Activated naive CD4-positive, alpha-beta T cell treated with anti-CD3 and anti-CD28 coated beads for 36 hours (primary cell): ENCODE measurements at regions of chr17 and their contacts with region 1.

Region 1: DNA sequence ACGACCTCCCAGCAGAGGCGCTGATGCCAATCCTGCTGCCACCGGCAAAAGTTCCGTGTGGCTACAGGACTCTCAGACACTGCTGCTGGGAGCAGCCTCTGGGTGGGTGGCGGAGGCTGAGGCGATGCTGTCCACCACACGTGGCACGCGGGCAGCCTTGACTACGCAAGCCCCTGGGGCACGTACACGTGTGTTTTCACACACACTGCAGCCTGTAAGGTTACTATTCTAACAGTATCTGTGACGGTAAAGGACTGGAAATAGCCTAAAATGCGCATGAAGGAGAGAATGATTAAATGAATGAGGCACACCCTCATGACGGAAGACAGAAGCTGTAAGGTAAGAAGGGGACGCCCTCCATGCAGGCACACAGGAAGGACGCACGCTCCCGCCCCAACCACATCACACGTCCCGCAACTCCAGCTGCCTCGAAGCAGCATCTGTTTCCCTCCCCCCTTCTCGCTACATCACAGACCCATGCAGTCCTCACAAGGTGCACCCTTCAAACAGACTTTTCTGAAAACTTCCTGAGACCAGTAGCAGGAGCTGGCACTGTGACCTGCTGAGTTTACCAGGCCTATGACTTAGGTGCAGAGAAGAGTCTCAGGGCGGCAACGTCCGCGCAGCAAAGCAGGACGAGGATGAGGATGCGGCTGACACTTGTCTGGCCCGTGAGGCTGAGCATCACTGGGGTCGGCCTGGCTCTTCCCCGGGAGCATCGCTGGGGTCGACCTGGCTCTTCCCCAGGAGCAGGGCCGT is 28.7 kb upstream of the FASN start:
- DNase-seq: peak; percentile 95
- H3K4me3 Mint-ChIP-seq: peak overlapping the region; percentile 71
- H3K27ac Mint-ChIP-seq: peak overlapping the region; percentile 95
- H3K4me1 Mint-ChIP-seq: peaks cover 65% of the 10 kb centered on the region
- H3K27me3 Mint-ChIP-seq: no peaks in the 10 kb centered on the region

Region 2: DNA sequence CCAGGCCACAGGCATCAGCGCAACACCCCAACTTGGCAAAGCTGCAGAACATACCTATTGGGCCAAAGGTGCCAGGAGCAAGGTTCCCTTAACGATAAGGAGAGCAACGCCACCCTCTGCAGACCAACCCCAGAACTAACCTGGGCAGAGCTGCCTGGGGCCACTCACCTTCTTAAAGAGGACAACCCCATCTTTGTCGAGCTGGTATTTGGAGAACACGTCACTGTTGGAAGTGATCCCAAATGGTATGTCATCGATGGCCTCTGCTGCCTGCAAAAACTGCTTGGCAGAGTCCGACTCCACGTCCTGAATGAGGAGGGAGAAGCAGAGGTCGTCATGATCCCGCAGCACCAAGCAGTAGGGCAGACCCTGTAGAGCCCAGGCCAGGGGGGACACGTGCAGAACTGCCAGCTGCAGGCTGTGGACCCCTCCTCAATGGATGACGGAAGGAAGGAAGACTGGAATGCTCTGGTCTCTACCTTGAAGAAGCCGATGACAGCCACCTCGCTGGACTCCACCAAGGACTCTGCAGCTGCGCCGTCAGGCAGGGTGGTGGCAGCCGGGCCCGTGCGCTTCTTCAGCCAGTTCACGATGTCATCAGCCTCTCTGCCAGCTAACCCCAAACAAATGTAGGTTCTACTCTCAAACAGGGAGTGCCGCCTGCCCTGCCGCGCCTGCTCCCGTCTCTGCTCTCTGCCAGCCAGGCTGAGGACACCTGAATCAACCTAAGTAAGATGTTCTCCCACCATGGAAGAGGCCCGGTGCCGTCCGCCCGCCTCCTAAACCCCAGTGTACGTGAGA is 271.6 kb before region 1 on chr17:
- CTCF ChIA-PET with region 1: no interaction called
- intact Hi-C with region 1: no loop called
- DNase-seq: peak; percentile 19
- H3K4me3 Mint-ChIP-seq: no peak overlapping the region
- H3K27ac Mint-ChIP-seq: no peak overlapping the region
- H3K4me1 Mint-ChIP-seq: peaks cover 32% of the 10 kb centered on the region
- H3K27me3 Mint-ChIP-seq: no peaks in the 10 kb centered on the region

Region 3: GRCh38 chr17:82153745-82154375 is 27.1 kb after region 1 on chr17:
- CTCF ChIA-PET with region 1: interaction called, 8 read pairs
- intact Hi-C with region 1: loop called (anchors 2 kb)
- DNase-seq: peak; percentile 88
- H3K4me3 Mint-ChIP-seq: no peak overlapping the region
- H3K27ac Mint-ChIP-seq: no peak overlapping the region
- H3K4me1 Mint-ChIP-seq: peaks cover 7% of the 10 kb centered on the region
- H3K27me3 Mint-ChIP-seq: no peaks in the 10 kb centered on the region

Region 4: DNA sequence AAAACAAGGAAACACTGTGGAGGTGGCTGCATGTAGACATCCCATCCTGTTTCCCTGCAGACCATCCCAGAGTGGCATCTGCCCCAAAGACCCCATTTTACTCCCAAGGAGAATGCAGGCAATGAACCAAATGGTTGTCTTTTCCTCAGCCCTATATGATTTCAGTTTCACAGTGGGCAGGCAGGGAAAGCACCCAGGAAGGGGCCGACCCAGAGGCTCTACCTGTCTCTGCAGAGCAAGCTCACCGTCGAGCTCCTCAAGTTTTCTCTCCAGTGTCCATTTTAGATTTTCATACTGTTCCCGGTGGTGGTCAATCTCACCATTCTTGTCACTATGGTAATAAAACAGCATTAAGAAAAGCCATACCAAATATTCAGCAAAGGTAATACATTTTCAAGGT is 71.4 kb after region 1 on chr17:
- CTCF ChIA-PET with region 1: interaction called, 3 read pairs
- intact Hi-C with region 1: loop called (anchors 2 kb)
- DNase-seq: peak; percentile 61
- H3K4me3 Mint-ChIP-seq: no peak overlapping the region
- H3K27ac Mint-ChIP-seq: no peak overlapping the region
- H3K4me1 Mint-ChIP-seq: peaks cover 44% of the 10 kb centered on the region
- H3K27me3 Mint-ChIP-seq: no peaks in the 10 kb centered on the region